ENCODE measurements at regions of chr10 and their contacts with region 1.

Region 1: DNA sequence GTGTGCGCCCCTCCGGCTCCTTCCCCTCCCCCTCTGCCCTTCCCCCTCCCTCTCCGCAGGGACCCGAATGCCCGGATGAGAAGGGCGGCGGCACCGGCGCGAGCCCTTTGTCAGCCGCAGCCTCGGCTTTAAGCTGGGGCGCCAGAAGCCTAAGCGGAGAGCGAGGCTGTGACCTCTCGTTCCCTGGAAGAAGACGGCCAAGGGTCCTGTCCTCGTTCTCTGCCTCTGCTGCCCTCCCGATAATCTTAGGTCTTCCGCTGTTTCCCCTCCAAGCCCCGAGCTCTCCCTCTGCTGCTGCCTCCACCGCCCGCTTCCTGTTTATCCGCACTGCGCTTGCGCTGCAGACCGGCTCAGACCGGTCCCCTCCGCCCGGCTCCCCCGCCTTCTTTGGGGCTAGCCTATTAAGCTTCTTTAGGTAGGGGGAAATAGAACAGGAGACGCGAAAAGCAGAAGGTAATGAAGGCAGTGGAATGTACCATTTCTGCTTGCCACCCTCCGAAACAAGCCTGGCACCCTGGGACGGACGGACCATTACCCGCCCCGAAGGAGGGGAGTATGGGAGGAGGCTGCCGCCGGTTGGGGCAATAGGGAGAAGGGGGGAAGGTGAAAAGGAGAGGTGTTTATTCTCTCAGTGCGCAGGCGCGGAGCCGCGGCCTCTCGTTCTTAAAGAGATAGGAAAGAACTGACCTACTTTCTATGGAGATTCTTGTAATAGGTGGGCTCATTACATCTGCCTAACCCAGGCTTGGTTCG is at the start of gene OGA:
- DNase-seq: peak; percentile 99
- H3K4me3 Mint-ChIP-seq: peak within 1 kb of the TSS; percentile 92
- H3K27ac Mint-ChIP-seq: peak within 1 kb of the TSS; percentile 93
- H3K4me1 Mint-ChIP-seq: peaks cover 40% of the 10 kb centered on the region
- H3K27me3 Mint-ChIP-seq: no peaks in the 10 kb centered on the region
- total RNA-seq, gene OGA: 90.8 to 96.3 TPM

Region 2: GRCh38 chr10:101353692-101354327 is 464.5 kb before region 1 on chr10 and contains the start of gene BTRC:
- CTCF ChIA-PET with region 1: no interaction called
- intact Hi-C with region 1: loop called (anchors 1 kb)
- DNase-seq: peak; percentile 98
- H3K4me3 Mint-ChIP-seq: peak within 1 kb of the TSS; percentile 92
- H3K27ac Mint-ChIP-seq: peak within 1 kb of the TSS; percentile 95
- H3K4me1 Mint-ChIP-seq: peaks cover 30% of the 10 kb centered on the region
- H3K27me3 Mint-ChIP-seq: peaks cover 2% of the 10 kb centered on the region
- total RNA-seq, gene BTRC: 10.9 to 12.7 TPM

Region 3: DNA sequence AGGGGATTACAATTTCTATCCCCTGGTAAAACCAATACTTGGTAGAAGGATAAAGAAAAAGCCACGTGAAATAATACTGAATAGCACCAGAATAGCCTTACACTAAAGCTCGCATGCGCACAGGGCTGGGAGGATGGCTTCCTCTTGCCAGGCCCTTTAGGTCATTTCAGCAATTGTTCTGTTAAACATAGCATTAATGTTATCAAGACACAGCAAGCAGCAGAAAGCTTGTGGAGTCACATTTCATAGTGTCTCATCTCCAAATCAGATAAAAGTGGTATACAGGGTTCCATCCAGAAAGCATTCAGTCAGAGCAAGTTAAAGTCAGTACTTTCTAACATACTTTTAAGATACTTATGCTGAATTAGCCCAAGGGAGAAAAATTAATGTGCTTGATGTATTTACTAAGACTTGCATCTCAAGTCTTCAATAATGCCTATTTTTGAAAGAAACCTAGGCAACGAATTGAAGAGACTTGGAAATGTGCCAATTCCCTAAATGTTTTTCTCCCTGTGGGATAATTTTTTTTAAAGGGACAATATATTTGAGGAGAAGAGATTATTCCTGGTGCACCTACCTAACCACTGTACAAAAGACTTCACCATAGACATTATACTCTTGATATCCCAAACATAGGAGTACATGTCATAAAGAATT is 20.8 kb before region 1 on chr10:
- CTCF ChIA-PET with region 1: interaction called, 6 read pairs
- intact Hi-C with region 1: loop called (anchors 2 kb)
- DNase-seq: no peak
- H3K4me3 Mint-ChIP-seq: no peak overlapping the region
- H3K27ac Mint-ChIP-seq: no peak overlapping the region
- H3K4me1 Mint-ChIP-seq: peaks cover 18% of the 10 kb centered on the region
- H3K27me3 Mint-ChIP-seq: no peaks in the 10 kb centered on the region

Region 4: GRCh38 chr10:101840741-101841453 is 22.6 kb after region 1 on chr10:
- CTCF ChIA-PET with region 1: interaction called, 46 read pairs
- intact Hi-C with region 1: loop called (anchors 1 kb)
- DNase-seq: peak; percentile 84
- H3K4me3 Mint-ChIP-seq: peak overlapping the region; percentile 76
- H3K27ac Mint-ChIP-seq: no peak overlapping the region
- H3K4me1 Mint-ChIP-seq: peaks cover 41% of the 10 kb centered on the region
- H3K27me3 Mint-ChIP-seq: peaks cover 14% of the 10 kb centered on the region

Region 5: GRCh38 chr10:101858723-101859500 is 40.6 kb after region 1 on chr10:
- CTCF ChIA-PET with region 1: no interaction called
- intact Hi-C with region 1: no loop called
- DNase-seq: no peak
- H3K4me3 Mint-ChIP-seq: no peak overlapping the region
- H3K27ac Mint-ChIP-seq: no peak overlapping the region
- H3K4me1 Mint-ChIP-seq: no peaks in the 10 kb centered on the region
- H3K27me3 Mint-ChIP-seq: no peaks in the 10 kb centered on the region

Region 6: DNA sequence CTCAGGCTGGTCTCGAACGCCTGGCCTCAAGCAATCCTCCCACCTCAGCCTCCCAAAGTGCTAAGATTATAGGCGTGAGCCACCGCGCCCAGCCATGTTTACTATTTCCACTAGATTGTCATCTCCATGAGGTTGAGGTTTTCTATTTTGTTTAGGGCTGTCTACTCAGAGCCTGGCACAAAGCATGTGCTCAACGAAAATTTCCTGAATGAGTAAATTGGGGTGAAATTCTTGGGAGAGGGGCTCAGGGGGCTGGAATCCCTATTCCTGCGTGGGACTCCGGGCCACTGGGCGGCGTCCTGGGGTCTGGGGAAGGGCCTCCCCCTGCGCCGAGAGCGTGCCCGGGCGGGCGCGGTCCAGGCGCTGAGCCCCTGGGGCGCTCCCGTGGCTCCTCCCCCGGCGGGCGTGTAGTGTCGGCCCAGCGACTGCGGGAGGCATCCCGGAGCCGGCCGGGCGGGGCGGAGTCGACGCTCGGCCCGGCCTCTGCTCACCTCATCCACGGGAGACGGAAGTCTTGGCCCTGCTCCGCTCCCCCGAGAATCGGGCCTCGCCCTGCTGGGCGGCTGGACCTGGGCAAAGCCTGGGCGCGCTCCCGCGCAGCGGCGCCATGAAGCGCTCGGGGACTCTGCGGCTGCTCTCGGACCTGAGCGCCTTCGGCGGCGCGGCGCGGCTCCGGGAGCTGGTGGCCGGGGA is 246.7 kb after region 1 on chr10 and contains the start of gene HPS6:
- CTCF ChIA-PET with region 1: no interaction called
- intact Hi-C with region 1: loop called (anchors 1 kb)
- DNase-seq: peak; percentile 91
- H3K4me3 Mint-ChIP-seq: peak within 1 kb of the TSS; percentile 83
- H3K27ac Mint-ChIP-seq: peak within 1 kb of the TSS; percentile 88
- H3K4me1 Mint-ChIP-seq: peaks cover 24% of the 10 kb centered on the region
- H3K27me3 Mint-ChIP-seq: no peaks in the 10 kb centered on the region
- total RNA-seq, gene HPS6: 8.7 to 8.8 TPM

Region 7: GRCh38 chr10:102132563-102133372 is 314.5 kb after region 1 on chr10 and contains the start of gene PPRC1:
- CTCF ChIA-PET with region 1: no interaction called
- intact Hi-C with region 1: loop called (anchors 1 kb)
- DNase-seq: peak; percentile 99
- H3K4me3 Mint-ChIP-seq: peak within 1 kb of the TSS; percentile 97
- H3K27ac Mint-ChIP-seq: peak within 1 kb of the TSS; percentile 96
- H3K4me1 Mint-ChIP-seq: peaks cover 42% of the 10 kb centered on the region
- H3K27me3 Mint-ChIP-seq: no peaks in the 10 kb centered on the region
- total RNA-seq, gene PPRC1: 54.6 to 55.0 TPM

Region 8: GRCh38 chr10:102420810-102421644 is 602.7 kb after region 1 on chr10 and contains the start of gene FBXL15:
- CTCF ChIA-PET with region 1: no interaction called
- intact Hi-C with region 1: loop called (anchors 5 kb)
- DNase-seq: peak; percentile 98
- H3K4me3 Mint-ChIP-seq: peak within 1 kb of the TSS; percentile 95
- H3K27ac Mint-ChIP-seq: peak within 1 kb of the TSS; percentile 91
- H3K4me1 Mint-ChIP-seq: peaks cover 30% of the 10 kb centered on the region
- H3K27me3 Mint-ChIP-seq: peaks cover 20% of the 10 kb centered on the region
- total RNA-seq, gene FBXL15: 9.9 to 10.8 TPM